ENCODE measurements at regions of chr4 and their contacts with region 1.

Region 1: DNA sequence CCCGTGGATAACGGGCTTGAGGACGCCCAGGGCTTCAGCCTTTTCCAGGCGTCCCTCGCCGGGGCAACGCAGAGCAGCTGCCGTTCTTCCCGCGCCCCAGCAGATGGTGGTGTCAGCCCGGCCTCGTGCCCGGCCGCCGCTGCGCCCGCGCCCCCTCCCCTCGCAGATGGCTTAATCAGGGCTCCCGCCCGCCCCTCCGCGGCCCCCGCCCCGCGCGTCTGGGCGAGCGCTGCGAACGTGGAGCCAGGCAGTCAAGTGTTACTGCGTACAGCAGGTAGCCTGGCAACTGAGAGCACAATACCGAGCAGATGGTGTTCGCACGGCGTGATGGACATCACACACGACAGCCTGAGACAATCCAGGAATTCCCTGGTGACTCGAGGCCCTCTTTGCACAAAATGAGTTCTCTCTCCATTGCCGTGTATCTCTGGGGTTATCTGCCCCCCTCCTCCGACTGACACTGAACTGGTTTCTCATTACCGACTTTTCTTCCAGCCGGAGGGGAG is 69.3 kb downstream of the MGST2 start:
- DNase-seq: peak; percentile 95
- H3K4me3 ChIP-seq: peak overlapping the region; percentile 23 to 58 (median 52)
- H3K27ac ChIP-seq: peak overlapping the region; percentile 81 to 90 (median 88)
- H3K4me1 ChIP-seq: peaks cover 0 to 32% (median 23%) of the 10 kb centered on the region in 4 donors
- H3K27me3 ChIP-seq: no peaks in the 10 kb centered on the region
- CTCF ChIP-seq: peak; percentile 55 to 87 (median 63)
- EP300 ChIP-seq: peak in 1 of 4 donors; percentile 31
- POLR2A ChIP-seq: no peak

Region 2: GRCh38 chr4:139441029-139441428 is 293.9 kb before region 1 on chr4:
- intact Hi-C with region 1: no loop called
- DNase-seq: no peak
- H3K4me3 ChIP-seq: no peak overlapping the region
- H3K27ac ChIP-seq: no peak overlapping the region
- H3K4me1 ChIP-seq: no peaks in the 10 kb centered on the region
- H3K27me3 ChIP-seq: no peaks in the 10 kb centered on the region
- CTCF ChIP-seq: no peak
- EP300 ChIP-seq: no peak
- POLR2A ChIP-seq: no peak

Region 3: DNA sequence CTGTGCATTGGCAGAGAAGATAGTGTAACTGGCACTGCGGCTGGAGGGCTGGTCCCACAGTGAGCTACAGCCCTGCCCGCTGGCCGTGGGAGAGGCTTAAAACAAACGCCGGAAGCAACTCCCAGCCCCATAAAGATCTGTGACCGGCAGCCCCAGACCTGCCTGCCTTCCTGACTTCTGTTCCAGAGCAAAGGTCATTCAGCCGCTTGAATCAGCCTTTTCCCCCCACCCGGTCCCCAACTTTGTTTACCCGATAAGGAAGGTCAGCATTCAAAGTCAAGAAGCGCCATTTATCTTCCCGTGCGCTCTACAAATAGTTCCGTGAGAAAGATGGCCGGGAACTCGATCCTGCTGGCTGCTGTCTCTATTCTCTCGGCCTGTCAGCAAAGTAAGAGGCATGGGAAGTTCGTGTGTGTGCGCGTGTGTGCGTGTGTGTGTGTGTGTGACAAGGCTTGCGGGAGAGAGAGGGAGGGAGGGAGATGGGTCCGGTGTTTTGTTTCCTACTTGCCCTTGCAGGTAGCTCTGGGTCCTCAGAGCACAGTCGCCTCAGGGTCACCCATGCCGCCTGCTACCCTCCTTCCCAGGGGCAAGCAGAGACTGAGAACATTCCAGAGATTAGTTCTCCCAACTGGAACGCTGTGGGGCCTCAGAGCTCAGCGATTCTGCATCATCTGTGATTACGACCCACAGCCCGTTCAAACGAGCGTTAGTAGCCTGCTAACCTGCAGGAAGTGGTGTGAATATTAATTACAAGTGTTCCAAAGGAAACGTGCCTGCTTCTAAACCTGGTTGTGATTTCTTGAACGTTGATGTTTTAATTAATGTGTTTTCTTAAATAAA is 69.0 kb before region 1 on chr4 and contains the start of gene MGST2:
- intact Hi-C with region 1: loop called (anchors 2 kb)
- DNase-seq: peak; percentile 82
- H3K4me3 ChIP-seq: peak within 1 kb of the TSS; percentile 40 to 59 (median 54)
- H3K27ac ChIP-seq: peak within 1 kb of the TSS; percentile 85 to 92 (median 89)
- H3K4me1 ChIP-seq: peaks cover 0 to 29% (median 9%) of the 10 kb centered on the region in 4 donors
- H3K27me3 ChIP-seq: no peaks in the 10 kb centered on the region
- CTCF ChIP-seq: no peak
- EP300 ChIP-seq: no peak
- POLR2A ChIP-seq: peak in 1 of 2 donors; percentile 50
- total RNA-seq, gene MGST2: 30.8 to 48.2 (median 42.3) TPM

Region 4: DNA sequence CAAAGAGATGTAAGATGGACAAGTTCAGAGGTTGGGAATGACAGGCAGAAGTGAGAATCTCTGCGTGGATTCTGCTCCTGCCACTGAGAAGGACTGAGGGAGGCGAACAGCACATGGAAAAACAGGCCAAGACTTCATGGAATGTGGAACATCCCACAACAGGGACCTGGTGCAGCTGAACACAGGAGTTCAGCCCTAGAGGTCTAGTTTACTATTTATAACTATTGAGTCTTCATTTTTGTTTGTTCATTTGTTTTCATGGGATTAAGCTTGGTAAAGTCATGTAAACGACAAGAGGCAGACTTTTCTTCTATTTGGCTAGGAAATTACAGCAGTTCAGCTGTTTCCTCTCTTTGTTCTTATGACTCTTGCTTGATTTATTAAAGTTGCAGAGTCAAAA is 184.6 kb after region 1 on chr4:
- intact Hi-C with region 1: loop called (anchors 5 kb)
- DNase-seq: no peak
- H3K4me3 ChIP-seq: no peak overlapping the region
- H3K27ac ChIP-seq: peak overlapping the region; percentile 77 to 90 (median 81)
- H3K4me1 ChIP-seq: peaks cover 0 to 77% (median 75%) of the 10 kb centered on the region in 4 donors
- H3K27me3 ChIP-seq: no peaks in the 10 kb centered on the region
- CTCF ChIP-seq: no peak
- EP300 ChIP-seq: no peak
- POLR2A ChIP-seq: no peak

Region 5: GRCh38 chr4:140049024-140049848 is 314.3 kb after region 1 on chr4:
- intact Hi-C with region 1: loop called (anchors 5 kb)
- DNase-seq: peak; percentile 72
- H3K4me3 ChIP-seq: peak overlapping the region; percentile 17 to 50 (median 44)
- H3K27ac ChIP-seq: peak overlapping the region; percentile 67 to 77 (median 72)
- H3K4me1 ChIP-seq: peaks cover 0 to 24% (median 23%) of the 10 kb centered on the region in 4 donors
- H3K27me3 ChIP-seq: no peaks in the 10 kb centered on the region
- CTCF ChIP-seq: no peak
- EP300 ChIP-seq: no peak
- POLR2A ChIP-seq: no peak

Region 6: GRCh38 chr4:140326395-140326993 is 591.6 kb after region 1 on chr4:
- intact Hi-C with region 1: loop called (anchors 2 kb)
- DNase-seq: no peak
- H3K4me3 ChIP-seq: no peak overlapping the region
- H3K27ac ChIP-seq: no peak overlapping the region
- H3K4me1 ChIP-seq: no peaks in the 10 kb centered on the region
- H3K27me3 ChIP-seq: no peaks in the 10 kb centered on the region
- CTCF ChIP-seq: peak; percentile 61 to 68 (median 64)
- EP300 ChIP-seq: no peak
- POLR2A ChIP-seq: no peak

Region 7: DNA sequence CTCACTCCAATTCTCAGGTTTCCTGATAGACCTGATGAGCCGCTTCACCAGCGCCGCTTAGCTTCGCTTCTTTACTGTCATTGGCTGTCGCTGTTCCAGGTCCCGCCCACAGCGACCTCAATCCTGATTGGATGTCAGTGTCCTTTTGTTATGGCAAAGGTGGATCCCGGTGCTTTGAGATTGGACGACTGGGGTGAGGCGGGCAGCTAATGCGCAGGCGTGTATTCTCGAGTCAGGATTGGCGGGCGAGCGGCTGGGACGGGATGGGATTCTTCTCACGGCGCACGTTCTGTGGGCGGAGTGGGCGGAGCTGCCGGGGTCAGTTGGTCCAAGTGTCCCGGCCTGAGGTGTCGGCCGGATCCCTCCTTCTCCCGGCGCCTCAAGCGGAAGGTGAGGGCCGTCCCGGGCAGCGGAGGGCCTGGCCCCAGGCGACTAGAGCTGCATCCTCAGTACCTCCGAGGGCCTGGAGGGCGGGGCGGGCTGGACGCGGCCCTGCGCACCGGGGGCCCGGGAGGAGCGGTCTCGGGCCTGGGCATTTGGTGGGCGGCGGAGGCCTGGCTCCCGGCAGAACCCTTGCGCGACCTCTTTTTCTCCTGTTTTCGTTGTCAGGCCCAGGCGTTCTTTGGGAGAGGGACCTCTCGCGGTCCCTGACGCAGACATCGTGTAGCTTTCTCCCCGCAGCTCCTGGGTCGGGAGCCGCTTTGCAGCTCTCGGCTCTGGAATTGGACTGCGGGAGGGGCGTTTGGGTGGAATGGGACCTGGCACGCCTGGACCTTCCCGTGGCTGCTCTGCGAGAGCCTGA is 638.6 kb after region 1 on chr4 and contains the start of gene SCOC:
- intact Hi-C with region 1: loop called (anchors 5 kb)
- DNase-seq: peak; percentile 100
- H3K4me3 ChIP-seq: peak within 1 kb of the TSS; percentile 72 to 93 (median 84)
- H3K27ac ChIP-seq: peak within 1 kb of the TSS; percentile 93 to 97 (median 96)
- H3K4me1 ChIP-seq: peaks cover 0 to 48% (median 28%) of the 10 kb centered on the region in 4 donors
- H3K27me3 ChIP-seq: no peaks in the 10 kb centered on the region
- CTCF ChIP-seq: no peak
- EP300 ChIP-seq: no peak
- POLR2A ChIP-seq: peak; percentile 44 to 67
- total RNA-seq, gene SCOC: 55.9 to 74.2 (median 65.5) TPM

Measured in sigmoid colon (tissue), 7 donors.